Endothelial cell of umbilical vein (primary cell): ENCODE measurements at regions of chr6 and their contacts with region 1.

Region 1: GRCh38 chr6:55239099-55239498 is 64.8 kb downstream of the HCRTR2 start:
- DNase-seq: peak; percentile 28
- H3K4me3 ChIP-seq: no peak overlapping the region
- H3K27ac ChIP-seq: no peak overlapping the region
- H3K4me1 ChIP-seq: no peaks in the 10 kb centered on the region
- H3K27me3 ChIP-seq: peaks cover 0 to 5% of the 10 kb centered on the region in 2 experiments
- CTCF ChIP-seq: no peak
- POLR2A ChIP-seq: no peak

Region 2: DNA sequence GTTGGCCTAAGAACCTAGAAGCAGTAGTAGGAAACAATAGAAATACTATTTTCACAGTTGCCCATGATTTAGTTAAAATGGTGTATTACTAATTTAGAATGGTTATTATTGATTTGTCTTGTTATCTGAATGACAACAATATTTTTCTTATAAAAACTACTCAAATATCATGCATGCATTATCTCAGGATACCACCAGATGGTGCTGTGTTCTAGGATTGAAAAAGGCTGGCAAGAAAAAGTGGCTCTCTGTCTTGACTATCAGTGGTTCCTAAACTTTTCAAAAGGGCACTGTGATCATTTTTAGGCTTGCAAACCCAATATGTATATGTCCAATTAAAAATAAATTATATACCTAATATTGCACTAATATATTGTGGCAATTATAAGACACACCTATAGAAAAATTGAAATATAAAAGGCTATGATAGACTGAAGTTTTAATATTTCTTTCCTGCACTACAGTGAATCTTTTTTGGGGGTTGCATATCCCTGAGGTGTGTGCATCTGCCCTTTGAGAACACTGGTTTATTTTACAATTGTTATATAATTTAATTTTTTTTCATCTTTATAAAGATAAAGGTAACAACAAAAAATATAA is 1259.5 kb before region 1 on chr6:
- CTCF ChIA-PET with region 1: no interaction called
- POLR2A ChIA-PET with region 1: no interaction called
- dilution Hi-C with region 1: no loop called
- intact Hi-C with region 1: loop called (anchors 1 kb)
- DNase-seq: peak; percentile 64
- H3K4me3 ChIP-seq: no peak overlapping the region
- H3K27ac ChIP-seq: no peak overlapping the region
- H3K4me1 ChIP-seq: peaks cover 10% of the 10 kb centered on the region
- H3K27me3 ChIP-seq: no peaks in the 10 kb centered on the region
- CTCF ChIP-seq: peak; percentile 50 to 54
- POLR2A ChIP-seq: no peak

Region 3: DNA sequence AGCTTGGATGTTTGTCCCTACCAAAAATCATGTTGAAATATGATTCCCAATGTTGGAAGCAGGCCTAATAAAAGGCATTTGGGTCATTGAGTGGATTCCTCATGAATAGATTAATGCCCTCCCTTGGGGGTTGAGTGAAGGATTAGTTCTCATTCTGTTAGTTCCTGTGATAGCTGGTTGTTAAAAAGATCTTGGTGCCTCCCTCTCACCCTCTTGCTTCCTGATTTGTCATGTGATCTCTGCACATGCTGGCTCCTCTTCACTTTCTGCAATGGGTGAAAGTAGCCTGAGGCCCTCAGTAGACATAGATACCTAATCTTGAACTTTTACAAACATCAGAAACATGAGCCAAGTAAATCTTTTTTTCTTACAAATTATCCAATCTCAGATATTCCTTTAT is 180.4 kb before region 1 on chr6:
- CTCF ChIA-PET with region 1: no interaction called
- POLR2A ChIA-PET with region 1: no interaction called
- dilution Hi-C with region 1: no loop called
- intact Hi-C with region 1: no loop called
- DNase-seq: no peak
- H3K4me3 ChIP-seq: no peak overlapping the region
- H3K27ac ChIP-seq: no peak overlapping the region
- H3K4me1 ChIP-seq: no peaks in the 10 kb centered on the region
- H3K27me3 ChIP-seq: no peaks in the 10 kb centered on the region
- CTCF ChIP-seq: no peak
- POLR2A ChIP-seq: no peak